ENCODE measurements at regions of chr12 and their contacts with region 1.

Region 1: GRCh38 chr12:122306407-122306806 is 40.1 kb upstream of the VPS33A start:
- DNase-seq: peak; percentile 7 to 47
- H3K4me3 ChIP-seq: no peak overlapping the region
- H3K27ac ChIP-seq: no peak overlapping the region
- H3K4me1 ChIP-seq: no peaks in the 10 kb centered on the region; a peak in 1 of 7 replicates
- H3K27me3 ChIP-seq: no peaks in the 10 kb centered on the region
- CTCF ChIP-seq: peak; percentile 69 to 88 (median 82)
- EP300 ChIP-seq: no peak
- POLR2A ChIP-seq: no peak
- RAD21 ChIP-seq: peak; percentile 64 to 76

Region 2: DNA sequence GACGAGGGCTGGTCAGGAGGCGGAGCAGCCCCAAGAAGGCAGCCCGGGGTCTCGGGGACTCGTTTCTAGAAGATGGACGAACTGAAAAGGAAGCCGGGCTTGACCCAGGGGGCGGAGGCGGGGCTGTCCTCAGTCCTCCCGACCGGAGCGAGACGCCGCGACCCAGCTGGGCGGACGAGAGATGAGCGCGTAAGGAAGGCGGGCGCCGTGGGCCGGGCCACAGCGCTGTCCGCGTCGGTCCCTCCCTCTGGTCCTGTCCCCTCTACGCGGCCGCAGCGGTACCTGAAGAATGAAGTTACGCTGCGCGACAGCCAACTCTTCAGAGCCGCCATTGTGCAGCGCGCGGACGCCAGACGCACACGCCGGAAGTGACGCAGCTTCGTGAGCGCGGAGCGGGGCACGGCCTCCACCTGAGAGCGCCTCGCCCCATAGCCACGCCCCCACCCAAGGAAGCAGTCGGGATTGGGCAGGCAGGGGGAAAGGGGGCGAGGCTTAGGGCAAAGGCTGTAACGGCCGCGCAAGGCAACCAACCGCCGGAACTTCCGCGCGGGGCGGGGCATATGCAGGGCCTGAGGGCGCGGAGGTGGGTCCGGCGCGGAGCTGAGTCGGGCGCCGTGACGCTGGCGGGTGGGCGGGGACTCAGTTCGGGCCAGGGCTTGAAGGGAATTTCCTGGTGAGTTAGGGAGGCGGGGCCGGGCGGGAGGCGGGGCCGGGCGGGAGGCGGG is 80.6 kb before region 1 on chr12 and contains the start of gene DIABLO:
- CTCF ChIA-PET with region 1: no interaction called
- POLR2A ChIA-PET with region 1: no interaction called
- DNase-seq: peak; percentile 97 to 99
- H3K4me3 ChIP-seq: peak within 1 kb of the TSS; percentile 83 to 100 (median 96)
- H3K27ac ChIP-seq: peak within 1 kb of the TSS; percentile 91
- H3K4me1 ChIP-seq: peaks cover 3 to 14% (median 10%) of the 10 kb centered on the region in 4 experiments
- H3K27me3 ChIP-seq: no peaks in the 10 kb centered on the region; a peak in 2 of 7 replicates
- CTCF ChIP-seq: no peak
- EP300 ChIP-seq: no peak
- POLR2A ChIP-seq: peak; percentile 96 to 97
- RAD21 ChIP-seq: no peak
- total RNA-seq, gene DIABLO: 68.3 and 71.5 TPM in 2 replicates

Region 3: DNA sequence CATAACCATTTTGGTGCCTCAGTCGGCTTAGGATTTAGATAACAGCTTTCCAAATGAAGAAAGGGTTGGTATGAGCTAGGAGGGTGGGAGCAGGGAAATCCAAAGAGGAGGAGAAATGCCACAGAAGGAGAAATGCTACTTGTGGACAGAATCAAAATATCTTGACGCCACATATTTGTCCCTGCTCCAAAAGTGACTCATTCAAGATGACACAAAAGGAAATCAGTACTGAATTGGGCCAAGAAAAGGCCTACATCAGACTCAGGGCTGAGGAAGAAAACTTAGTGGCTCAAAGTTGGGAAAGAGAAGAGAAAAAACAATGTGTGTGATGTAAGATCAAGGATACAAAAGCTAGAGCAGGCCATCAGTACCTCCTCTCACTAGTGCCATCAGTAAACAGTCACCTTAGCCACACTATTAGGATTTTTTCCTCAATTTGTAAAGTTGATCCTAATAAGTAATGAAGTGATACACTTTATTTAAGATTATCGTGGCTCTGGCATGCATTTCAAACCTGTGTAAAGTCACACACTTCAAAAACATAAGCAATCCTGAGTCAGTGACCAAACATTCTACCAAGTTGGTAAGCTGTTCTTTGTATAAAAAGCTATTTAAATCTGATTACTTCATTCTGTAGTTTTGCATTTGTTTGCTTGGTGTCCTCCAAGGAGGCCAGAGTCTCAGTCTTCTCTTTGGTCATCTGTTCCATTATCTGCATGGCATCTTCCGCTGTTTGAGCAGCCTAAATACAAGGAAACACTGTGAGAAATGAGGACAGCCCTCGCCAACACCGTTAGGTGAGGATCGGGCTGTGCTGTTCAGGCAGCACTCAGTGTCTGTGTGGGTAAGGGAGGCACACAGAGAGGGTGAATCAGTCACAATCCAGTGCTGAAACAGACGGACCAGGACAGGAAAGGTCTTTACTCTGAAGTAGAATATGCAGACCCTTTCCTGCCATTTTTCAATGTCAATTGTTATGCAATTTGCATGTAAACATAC is 12.5 kb after region 1 on chr12:
- CTCF ChIA-PET with region 1: interaction called, 46 read pairs
- POLR2A ChIA-PET with region 1: no interaction called
- DNase-seq: no peak
- H3K4me3 ChIP-seq: no peak overlapping the region
- H3K27ac ChIP-seq: no peak overlapping the region
- H3K4me1 ChIP-seq: no peaks in the 10 kb centered on the region
- H3K27me3 ChIP-seq: no peaks in the 10 kb centered on the region
- CTCF ChIP-seq: no peak
- EP300 ChIP-seq: no peak
- POLR2A ChIP-seq: no peak
- RAD21 ChIP-seq: no peak

Measured in H1 (cell line).